ENCODE measurements at regions of chr2 and their contacts with region 1.

Region 1: GRCh38 chr2:45699032-45699658 is 47.7 kb downstream of the PRKCE start:
- DNase-seq: peak; percentile 29
- H3K4me3 ChIP-seq: no peak overlapping the region
- H3K27ac ChIP-seq: no peak overlapping the region
- H3K4me1 ChIP-seq: no peaks in the 10 kb centered on the region
- H3K27me3 ChIP-seq: no peaks in the 10 kb centered on the region
- CTCF ChIP-seq: no peak
- POLR2A ChIP-seq: no peak

Region 2: DNA sequence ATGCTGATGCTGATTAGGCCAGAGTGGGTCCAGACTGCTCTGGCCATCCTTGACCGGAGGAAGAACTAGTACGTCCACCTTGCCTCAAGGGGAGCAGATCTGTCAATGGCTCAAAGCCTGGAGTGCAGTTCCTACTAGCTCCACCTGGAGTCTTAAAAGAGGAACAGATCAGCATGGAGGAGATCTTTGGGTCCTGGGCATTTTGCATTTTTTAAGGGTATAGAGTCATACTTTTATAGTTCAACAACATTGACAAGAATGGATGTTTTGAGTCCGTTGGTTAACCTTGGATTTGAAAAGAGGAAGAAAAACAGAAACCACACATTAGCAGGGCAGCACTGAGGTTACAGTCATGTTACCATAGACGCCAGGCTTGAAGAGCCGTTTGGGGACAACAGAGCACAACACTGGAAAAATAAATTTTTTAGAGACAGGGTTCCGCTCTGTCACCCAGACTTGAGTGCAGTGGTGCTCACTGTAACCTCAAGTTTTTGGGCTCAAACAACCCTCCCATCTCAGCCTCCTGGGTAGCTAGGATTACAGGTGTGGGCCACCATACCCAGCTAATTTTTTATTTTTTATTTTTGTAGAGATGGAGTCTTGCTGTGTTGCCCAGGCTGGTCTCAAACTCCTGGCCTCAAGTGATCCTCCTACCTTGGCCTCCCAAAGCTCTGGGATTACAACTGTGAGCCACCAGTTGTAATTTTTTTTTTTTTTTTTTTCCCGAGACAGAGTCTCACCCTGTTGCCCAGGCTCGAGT is 30.8 kb after region 1 on chr2:
- CTCF ChIA-PET with region 1: interaction called, 10 read pairs
- POLR2A ChIA-PET with region 1: no interaction called
- dilution Hi-C with region 1: no loop called
- intact Hi-C with region 1: no loop called
- DNase-seq: peak; percentile 12
- H3K4me3 ChIP-seq: no peak overlapping the region
- H3K27ac ChIP-seq: no peak overlapping the region
- H3K4me1 ChIP-seq: no peaks in the 10 kb centered on the region
- H3K27me3 ChIP-seq: no peaks in the 10 kb centered on the region
- CTCF ChIP-seq: peak; percentile 9 to 18
- POLR2A ChIP-seq: no peak

Measured in endothelial cell of umbilical vein (primary cell).